GM23248 (cell line): ENCODE measurements at regions of chr16 and their contacts with region 1.

Region 1: GRCh38 chr16:4402439-4403132 is 13.8 kb downstream of the CORO7 start:
- DNase-seq: peak; percentile 87
- H3K4me3 ChIP-seq: no peak overlapping the region
- H3K27ac ChIP-seq: no peak overlapping the region
- H3K4me1 ChIP-seq: no peaks in the 10 kb centered on the region
- H3K27me3 ChIP-seq: no peaks in the 10 kb centered on the region

Region 2: GRCh38 chr16:4350787-4351659 is 51.6 kb before region 1 on chr16 and contains the start of gene PAM16:
- in situ Hi-C with region 1: loop called (anchors 10 kb)
- DNase-seq: peak; percentile 98
- H3K4me3 ChIP-seq: peak within 1 kb of the TSS; percentile 89
- H3K27ac ChIP-seq: peak within 1 kb of the TSS; percentile 79
- H3K4me1 ChIP-seq: peaks cover 19% of the 10 kb centered on the region
- H3K27me3 ChIP-seq: no peaks in the 10 kb centered on the region
- total RNA-seq, gene PAM16: 20.4 and 33.0 TPM in 2 replicates